ENCODE measurements at regions of chr15 and their contacts with region 1.

Region 1: DNA sequence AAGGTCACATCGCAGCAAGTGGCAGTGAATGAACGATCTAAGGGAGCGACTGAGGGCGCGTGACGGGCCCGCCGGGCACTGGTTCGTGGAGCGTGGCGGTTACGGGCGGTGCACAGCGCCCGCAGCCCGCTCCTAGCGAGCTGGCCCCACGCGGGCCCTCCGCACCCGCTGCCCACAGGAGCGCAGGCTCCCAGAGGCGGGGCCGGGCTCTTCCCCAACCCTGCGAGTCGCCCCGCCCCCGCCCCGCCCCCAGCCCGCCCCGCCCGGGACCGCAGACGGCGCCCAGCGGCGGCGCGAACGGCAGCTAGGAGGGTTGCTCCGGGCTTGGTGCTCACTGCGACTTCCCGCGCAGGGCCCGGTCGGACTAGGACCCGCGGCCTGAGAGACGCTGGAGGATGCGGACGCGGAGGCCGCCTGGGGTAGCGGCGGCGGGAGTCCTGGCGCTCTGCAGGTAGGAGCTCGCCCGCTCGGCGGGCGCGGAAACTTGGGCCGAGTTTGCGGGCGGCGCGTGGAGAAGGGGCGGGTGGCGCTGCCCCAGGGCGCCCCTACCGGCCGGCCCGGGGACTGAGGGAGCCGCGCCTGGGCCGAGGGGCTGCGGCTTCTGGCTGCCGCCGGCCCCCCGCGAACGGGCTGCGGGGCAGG is at the start of gene C15orf39:
- DNase-seq: peak; percentile 82
- ATAC-seq: peak; percentile 78 to 87
- total RNA-seq, gene C15orf39: 9.0 to 14.2 TPM

Region 2: GRCh38 chr15:74692327-74692726 is 509.4 kb before region 1 on chr15:
- intact Hi-C with region 1: no loop called
- DNase-seq: no peak
- ATAC-seq: no peak

Region 3: DNA sequence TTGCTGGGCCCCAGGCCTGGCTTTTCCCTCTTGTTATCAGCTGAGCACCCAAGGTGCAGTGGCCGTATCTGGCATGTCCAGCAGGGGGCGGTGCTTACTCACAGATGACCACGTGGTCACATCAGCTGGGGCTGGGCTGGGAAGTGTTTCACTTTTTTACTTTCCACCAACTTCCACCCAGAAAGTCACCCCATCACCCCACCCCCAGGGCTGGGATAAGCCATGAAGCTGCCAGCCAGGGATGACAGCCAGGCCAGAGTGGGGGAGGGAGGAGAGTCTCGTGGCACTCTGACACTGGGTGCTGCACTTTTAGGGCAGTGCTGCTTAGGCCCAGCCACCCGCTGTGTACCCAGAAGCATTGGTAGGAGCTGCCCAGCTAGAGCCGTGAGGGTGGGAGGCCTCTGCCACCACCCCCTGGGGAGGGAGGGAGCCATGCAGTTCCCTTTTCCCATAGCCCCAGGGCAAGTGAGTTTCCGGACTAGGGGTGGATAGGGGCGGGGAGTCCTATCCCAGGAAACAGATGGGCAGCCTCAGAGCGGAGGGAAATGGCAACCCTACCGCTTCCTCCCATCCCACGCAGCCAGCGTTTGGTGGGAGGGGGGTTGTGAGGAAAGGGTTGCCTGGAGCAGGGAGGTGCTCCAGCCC is 172.2 kb before region 1 on chr15:
- intact Hi-C with region 1: loop called (anchors 1 to 2 kb)
- DNase-seq: peak; percentile 95
- ATAC-seq: peak; percentile 88

Region 4: GRCh38 chr15:75042730-75043508 is 158.8 kb before region 1 on chr15:
- intact Hi-C with region 1: loop called in 1 of 2 experiments (anchors 1 kb)
- DNase-seq: peak; percentile 79
- ATAC-seq: peak; percentile 43 to 56

Region 5: GRCh38 chr15:75054172-75054897 is 147.4 kb before region 1 on chr15:
- intact Hi-C with region 1: no loop called
- DNase-seq: no peak
- ATAC-seq: no peak

Region 6: DNA sequence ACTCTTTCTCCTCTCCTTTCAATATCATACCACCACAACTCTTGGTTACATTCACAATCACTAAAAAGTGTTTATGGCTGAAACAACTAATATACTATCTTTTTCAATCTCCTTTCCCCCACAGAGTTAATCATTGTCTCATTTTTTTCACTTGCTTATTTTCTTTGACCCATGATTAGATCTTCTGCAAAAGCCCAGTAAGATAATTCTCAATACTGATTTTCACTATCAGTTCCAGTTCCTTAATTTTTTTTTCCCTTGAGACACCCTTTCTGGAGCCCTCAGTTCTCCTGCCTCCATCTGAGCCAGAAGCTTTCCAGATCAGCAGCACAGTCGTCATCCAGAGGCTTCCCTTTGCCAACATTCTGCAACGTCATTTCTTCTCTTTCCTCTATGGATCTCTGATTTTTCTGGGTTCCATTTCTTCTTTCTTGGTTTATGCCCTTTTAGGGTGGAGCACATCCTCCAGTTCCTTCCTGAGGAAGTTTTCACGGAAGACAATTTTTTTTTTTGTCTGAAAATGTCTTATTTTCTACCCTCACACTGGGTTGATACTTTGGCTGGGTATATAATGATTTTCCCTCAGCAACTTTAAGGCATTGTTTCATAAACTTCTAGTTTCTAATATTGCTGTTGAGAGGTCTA is 88.8 kb before region 1 on chr15:
- intact Hi-C with region 1: loop called in 1 of 2 experiments (anchors 5 kb)
- DNase-seq: no peak
- ATAC-seq: peak in 1 of 2 donors; percentile 20

Measured in left cardiac atrium (tissue), 4 donors.